Psoas muscle (tissue), 8 donors: ENCODE measurements at regions of chr4 and their contacts with region 1.

Region 1: DNA sequence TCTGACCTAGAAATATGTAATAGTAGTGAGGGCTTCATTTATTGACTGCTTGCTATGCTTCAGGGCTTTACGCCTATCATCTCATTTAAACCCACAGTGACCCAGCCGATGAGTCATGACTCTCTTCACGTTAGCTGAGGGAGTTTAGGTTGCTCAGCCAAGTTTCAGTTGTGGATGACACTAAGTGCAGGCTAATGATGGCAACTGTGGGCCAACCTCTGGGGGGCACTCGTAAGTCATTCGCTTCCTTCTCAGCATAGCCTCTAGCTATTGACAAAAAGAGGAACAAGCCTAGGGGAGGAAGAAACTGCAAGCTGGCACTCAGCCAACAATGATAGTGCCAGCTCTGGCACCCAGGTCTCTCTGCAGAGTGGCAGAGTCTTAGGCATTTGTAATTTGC is 325.0 kb downstream of the ARHGAP10 start:
- DNase-seq: peak; percentile 58 to 72
- ATAC-seq: peak; percentile 27 to 73 (median 57)
- H3K4me3 ChIP-seq: no peak overlapping the region
- H3K27ac ChIP-seq: peak overlapping the region; percentile 91
- H3K4me1 ChIP-seq: peaks cover 90% of the 10 kb centered on the region
- H3K27me3 ChIP-seq: no peaks in the 10 kb centered on the region
- CTCF ChIP-seq: no peak

Region 2: DNA sequence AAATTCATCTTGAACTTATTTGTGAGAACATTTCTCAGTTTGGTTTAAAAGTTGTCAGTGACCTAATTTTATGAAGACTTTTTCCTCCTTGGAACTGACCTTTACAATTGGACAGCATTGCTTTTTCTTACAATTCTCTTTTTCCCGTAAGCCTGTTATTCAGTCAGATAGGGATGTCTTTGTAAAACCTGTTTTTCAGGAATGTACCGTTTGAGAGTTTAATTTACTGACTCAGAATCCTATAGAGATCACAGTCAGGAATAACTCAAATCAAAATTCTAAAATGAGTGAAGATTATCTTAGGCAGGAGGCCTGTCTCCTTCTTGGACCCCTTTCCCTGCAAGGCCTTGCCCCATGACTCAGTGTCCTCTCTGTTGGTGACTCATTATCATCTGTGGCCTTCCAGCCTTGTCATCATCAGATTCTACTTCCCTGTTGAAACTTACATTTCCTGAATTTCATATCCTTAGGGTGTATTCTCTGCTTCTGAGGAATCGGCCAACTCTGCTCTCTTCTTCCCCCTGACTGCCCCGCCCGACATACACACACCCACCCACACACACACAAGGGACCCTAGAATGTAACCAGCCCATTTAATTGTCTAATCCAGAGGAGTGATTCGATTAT is 225.2 kb before region 1 on chr4:
- intact Hi-C with region 1: loop called in 1 of 2 experiments (anchors 10 kb)
- DNase-seq: peak in 1 of 2 donors; percentile 52
- ATAC-seq: peak; percentile 64 to 75 (median 69)
- H3K4me3 ChIP-seq: no peak overlapping the region
- H3K27ac ChIP-seq: peak overlapping the region; percentile 84
- H3K4me1 ChIP-seq: peaks cover 84% of the 10 kb centered on the region
- H3K27me3 ChIP-seq: no peaks in the 10 kb centered on the region
- CTCF ChIP-seq: no peak

Region 3: GRCh38 chr4:147916351-147916750 is 140.5 kb before region 1 on chr4:
- intact Hi-C with region 1: no loop called
- DNase-seq: no peak
- ATAC-seq: no peak
- H3K4me3 ChIP-seq: no peak overlapping the region
- H3K27ac ChIP-seq: no peak overlapping the region
- H3K4me1 ChIP-seq: no peaks in the 10 kb centered on the region
- H3K27me3 ChIP-seq: no peaks in the 10 kb centered on the region
- CTCF ChIP-seq: no peak

Region 4: DNA sequence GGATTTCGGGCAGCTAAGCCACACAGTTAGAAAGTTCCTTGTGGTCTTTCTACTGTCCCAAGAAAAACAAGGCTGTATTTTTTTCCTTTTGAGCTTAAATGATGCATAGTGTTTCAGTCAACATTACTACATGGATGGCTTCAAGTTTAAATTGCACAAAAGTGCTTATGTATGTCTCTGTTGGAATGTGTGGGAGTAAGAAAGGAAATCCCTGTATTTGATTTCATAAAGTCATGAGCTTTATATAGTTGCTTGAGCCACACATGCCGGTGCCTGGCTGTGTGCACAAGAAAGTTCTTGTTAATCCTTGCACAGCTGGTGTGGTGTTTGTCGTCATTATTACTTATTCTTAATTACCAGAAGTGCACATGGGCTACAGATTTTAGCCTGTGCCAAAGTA is 62.8 kb before region 1 on chr4:
- intact Hi-C with region 1: loop called in 1 of 2 experiments (anchors 5 kb)
- DNase-seq: no peak
- ATAC-seq: peak; percentile 86 to 95 (median 91)
- H3K4me3 ChIP-seq: peak overlapping the region; percentile 1
- H3K27ac ChIP-seq: peak overlapping the region; percentile 71
- H3K4me1 ChIP-seq: peaks cover 32% of the 10 kb centered on the region
- H3K27me3 ChIP-seq: no peaks in the 10 kb centered on the region
- CTCF ChIP-seq: no peak

Region 5: GRCh38 chr4:148044912-148045352 is 11.9 kb before region 1 on chr4:
- intact Hi-C with region 1: loop called in 1 of 2 experiments (anchors 1 kb)
- DNase-seq: no peak
- ATAC-seq: peak; percentile 40 to 65 (median 56)
- H3K4me3 ChIP-seq: peak overlapping the region; percentile 59
- H3K27ac ChIP-seq: peak overlapping the region; percentile 93
- H3K4me1 ChIP-seq: peaks cover 40% of the 10 kb centered on the region
- H3K27me3 ChIP-seq: no peaks in the 10 kb centered on the region
- CTCF ChIP-seq: no peak